Right cardiac atrium (tissue), 5 donors: ENCODE measurements at regions of chr2 and their contacts with region 1.

Region 1: GRCh38 chr2:190938771-190939335 is 58.2 kb downstream of the GLS start:
- DNase-seq: no peak
- ATAC-seq: no peak
- H3K4me3 ChIP-seq: no peak overlapping the region
- H3K27ac ChIP-seq: no peak overlapping the region
- H3K4me1 ChIP-seq: no peaks in the 10 kb centered on the region
- H3K27me3 ChIP-seq: no peaks in the 10 kb centered on the region

Region 2: GRCh38 chr2:190970873-190971506 is 32.1 kb after region 1 on chr2:
- intact Hi-C with region 1: loop called in 1 of 4 experiments (anchors 5 kb)
- DNase-seq: no peak
- ATAC-seq: peak in 1 of 2 donors; percentile 17
- H3K4me3 ChIP-seq: no peak overlapping the region
- H3K27ac ChIP-seq: no peak overlapping the region
- H3K4me1 ChIP-seq: peaks cover 3% of the 10 kb centered on the region
- H3K27me3 ChIP-seq: no peaks in the 10 kb centered on the region